Right ventricle myocardium inferior (tissue), 1 donor: ENCODE measurements at regions of chr12 and their contacts with region 1.

Region 1: DNA sequence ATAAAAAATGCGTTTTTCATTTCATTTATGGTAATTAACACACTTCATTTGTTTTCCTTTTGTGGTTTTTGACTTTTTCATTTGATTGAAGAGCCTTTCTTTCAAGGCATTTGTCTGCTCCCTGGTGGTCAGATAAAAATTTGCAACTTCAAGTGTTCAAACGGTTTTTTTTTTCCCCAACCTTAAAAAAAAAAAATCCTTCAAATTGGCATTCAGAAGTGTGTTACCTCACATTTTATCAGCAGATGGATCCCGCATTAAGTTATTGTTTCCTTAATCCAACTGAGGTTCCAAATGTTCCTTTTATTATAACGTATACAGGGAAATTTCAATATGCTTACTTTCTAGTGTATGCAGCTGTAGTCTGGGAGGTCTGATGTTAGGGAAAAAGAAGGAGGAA is 47.2 kb downstream of the MYF5 start:
- DNase-seq: no peak
- ATAC-seq: no peak

Region 2: GRCh38 chr12:80412369-80412953 is 351.4 kb before region 1 on chr12:
- intact Hi-C with region 1: loop called (anchors 5 kb)
- DNase-seq: no peak
- ATAC-seq: no peak

Region 3: DNA sequence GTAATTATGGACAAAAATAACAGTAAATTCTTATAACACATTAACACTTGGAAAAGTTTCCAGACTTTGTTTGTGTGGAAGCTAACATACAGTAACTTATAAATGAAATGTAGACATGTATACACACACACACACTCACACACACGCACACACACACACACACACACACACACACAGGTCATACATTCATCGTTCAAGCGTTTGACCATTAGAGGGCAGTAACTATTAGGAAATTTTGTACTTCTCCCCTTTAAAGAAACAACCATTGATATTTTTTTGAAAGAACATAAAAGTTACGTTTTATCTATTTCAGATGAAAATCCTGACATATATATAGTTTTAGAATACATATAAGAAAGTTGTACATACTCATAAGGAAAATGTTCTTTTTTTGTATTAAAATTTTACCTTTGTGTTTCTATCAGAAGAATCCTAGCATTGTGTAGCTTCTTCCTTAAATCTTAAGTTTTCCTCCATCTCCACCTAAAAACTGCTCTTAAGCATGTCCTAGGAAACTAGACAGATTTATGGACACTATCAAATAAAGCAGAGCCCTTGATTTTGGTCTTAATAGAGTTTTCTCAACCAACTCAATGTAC is 290.9 kb before region 1 on chr12:
- intact Hi-C with region 1: loop called (anchors 2 kb)
- DNase-seq: no peak
- ATAC-seq: no peak

Region 4: DNA sequence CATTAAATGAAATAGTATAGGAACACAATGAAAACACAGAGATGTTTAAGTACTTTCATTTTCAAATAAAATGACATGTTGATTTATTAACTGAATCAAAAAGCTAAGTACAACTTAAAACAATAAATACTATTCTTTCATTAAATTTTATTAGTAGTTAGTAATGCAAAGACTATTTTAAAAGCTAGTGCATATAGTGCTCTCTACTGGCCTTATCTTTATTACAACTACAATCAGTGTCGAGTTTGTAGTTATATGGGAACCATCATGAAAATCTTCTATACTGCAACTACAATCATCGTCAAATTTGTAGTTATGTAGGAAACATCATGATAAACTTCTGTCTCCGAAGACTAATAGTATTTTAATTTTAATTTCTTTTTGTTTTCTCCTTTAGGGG is 182.7 kb after region 1 on chr12:
- intact Hi-C with region 1: loop called (anchors 10 kb)
- DNase-seq: no peak
- ATAC-seq: no peak